ENCODE measurements at regions of chr14 and their contacts with region 1.

Region 1: DNA sequence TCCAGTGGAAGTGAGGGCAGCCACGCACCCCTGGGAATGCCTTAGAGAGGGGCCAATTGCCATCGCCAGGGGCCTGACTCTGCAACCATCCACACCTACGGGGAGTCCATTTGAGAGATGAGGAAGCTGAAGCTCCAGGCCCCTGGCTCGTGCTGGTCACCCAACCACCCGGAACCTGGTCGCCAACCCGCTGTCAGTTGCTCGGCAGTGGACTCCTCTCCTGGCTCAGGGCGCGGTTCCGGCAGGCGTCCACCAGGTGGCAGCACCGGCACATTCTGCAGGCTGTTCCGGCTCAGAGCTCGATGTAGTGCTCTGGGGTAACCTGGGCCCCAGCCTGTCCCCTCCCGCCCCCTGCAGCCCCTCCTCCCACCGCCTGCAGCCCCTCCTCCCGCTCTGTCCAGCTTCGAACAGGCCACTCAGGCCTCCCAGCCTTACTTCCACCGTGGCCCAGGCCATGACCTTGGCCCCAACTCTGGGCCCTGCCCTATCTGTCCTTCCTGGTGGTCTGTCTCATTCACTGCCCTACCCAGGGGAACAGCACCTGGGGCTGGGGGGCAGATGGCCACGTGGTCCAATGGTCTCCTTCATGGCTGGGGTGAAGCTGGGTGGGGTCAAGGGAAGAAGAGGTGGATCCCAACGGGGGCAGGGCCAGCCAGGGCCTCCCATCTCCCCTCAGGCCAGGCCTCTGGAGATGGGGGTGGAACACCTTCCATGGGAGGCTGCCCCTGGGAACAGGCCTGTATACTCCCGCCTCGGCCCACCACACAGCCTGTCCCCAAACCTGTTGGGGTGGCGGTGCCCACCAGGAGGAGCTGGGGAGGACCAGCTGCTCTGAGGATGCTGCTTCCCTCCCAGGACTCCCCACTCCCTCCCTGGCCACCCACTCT is 15.7 kb downstream of the SIVA1 start:
- DNase-seq: peak; percentile 38
- H3K4me3 ChIP-seq: no peak overlapping the region
- H3K27ac ChIP-seq: no peak overlapping the region
- H3K27me3 ChIP-seq: no peaks in the 10 kb centered on the region
- CTCF ChIP-seq: peak; percentile 81

Region 2: GRCh38 chr14:104752735-104753531 is 15.7 kb before region 1 on chr14 and contains the start of gene SIVA1:
- CTCF ChIA-PET with region 1: interaction called, 39 read pairs
- POLR2A ChIA-PET with region 1: interaction called, 12 read pairs
- DNase-seq: peak; percentile 98
- H3K4me3 ChIP-seq: peak within 1 kb of the TSS; percentile 94
- H3K27ac ChIP-seq: peak within 1 kb of the TSS; percentile 52
- H3K27me3 ChIP-seq: no peaks in the 10 kb centered on the region
- CTCF ChIP-seq: no peak
- polyA plus RNA-seq, gene SIVA1: 49.7 and 75.3 TPM in 2 replicates

Region 3: DNA sequence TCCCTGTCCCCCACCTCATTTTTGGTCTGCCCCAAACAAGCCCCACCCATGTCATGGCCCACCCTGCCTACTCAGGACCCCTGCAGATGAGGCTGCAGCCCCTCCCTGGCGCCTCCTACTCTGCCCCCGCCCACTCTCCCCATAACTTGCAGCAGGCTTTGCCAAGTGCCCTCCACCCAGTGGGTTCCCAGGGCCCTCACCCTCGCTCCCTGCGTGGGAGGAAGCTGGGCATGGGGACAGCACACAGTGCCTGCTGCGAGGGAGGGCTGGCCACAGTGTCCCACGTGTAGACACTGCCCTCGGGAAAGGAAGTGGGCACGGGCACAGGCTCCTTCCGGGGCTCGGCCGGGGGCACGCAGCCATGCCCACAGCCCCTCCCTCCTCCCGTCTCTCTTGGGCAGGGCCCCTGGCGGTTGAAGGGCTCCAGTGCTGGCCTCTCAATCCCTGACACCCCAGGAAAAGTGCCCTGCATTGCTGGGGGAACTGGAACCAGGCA is 17.5 kb after region 1 on chr14:
- CTCF ChIA-PET with region 1: interaction called, 12 read pairs
- POLR2A ChIA-PET with region 1: no interaction called
- DNase-seq: no peak
- H3K4me3 ChIP-seq: no peak overlapping the region
- H3K27ac ChIP-seq: no peak overlapping the region
- H3K27me3 ChIP-seq: no peaks in the 10 kb centered on the region
- CTCF ChIP-seq: no peak

Region 4: GRCh38 chr14:104794641-104795467 is 26.2 kb after region 1 on chr14:
- CTCF ChIA-PET with region 1: interaction called, 11 read pairs
- POLR2A ChIA-PET with region 1: no interaction called
- DNase-seq: no peak
- H3K4me3 ChIP-seq: peak overlapping the region; percentile 79
- H3K27ac ChIP-seq: peak overlapping the region; percentile 31
- H3K27me3 ChIP-seq: no peaks in the 10 kb centered on the region
- CTCF ChIP-seq: no peak

Region 5: GRCh38 chr14:104820669-104821228 is 52.1 kb after region 1 on chr14:
- CTCF ChIA-PET with region 1: interaction called, 90 read pairs
- POLR2A ChIA-PET with region 1: interaction called, 5 read pairs
- DNase-seq: peak; percentile 37
- H3K4me3 ChIP-seq: no peak overlapping the region
- H3K27ac ChIP-seq: no peak overlapping the region
- H3K27me3 ChIP-seq: no peaks in the 10 kb centered on the region
- CTCF ChIP-seq: peak; percentile 76

Region 6: GRCh38 chr14:104826189-104826860 is 57.6 kb after region 1 on chr14:
- CTCF ChIA-PET with region 1: interaction called, 90 read pairs
- POLR2A ChIA-PET with region 1: interaction called, 4 read pairs
- DNase-seq: peak; percentile 21
- H3K4me3 ChIP-seq: peak overlapping the region; percentile 77
- H3K27ac ChIP-seq: peak overlapping the region; percentile 11
- H3K27me3 ChIP-seq: no peaks in the 10 kb centered on the region
- CTCF ChIP-seq: peak; percentile 58